AG04449 (cell line): ENCODE measurements at regions of chr1 and their contacts with region 1.

Region 1: DNA sequence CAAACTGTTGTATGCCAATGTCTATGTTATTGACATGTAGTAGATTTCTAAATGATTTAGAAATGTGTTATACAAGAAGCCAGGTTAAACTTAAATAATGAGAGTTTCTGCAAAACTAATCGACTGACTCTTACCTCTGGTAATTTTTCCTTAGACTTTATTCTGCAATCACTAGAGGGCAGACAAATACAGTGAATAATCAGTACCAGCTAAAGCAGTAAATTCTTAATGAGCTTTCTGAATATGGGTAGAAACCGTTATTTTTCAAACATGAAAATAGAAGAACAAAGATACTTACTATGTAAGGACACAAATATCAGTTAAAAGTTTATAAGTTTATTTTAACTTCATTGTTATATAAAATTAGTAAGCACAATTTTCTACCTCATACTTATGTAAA is 97.9 kb upstream of the RGS1 start:
- DNase-seq: no peak
- H3K4me3 ChIP-seq: no peak overlapping the region
- CTCF ChIP-seq: peak; percentile 33

Region 2: GRCh38 chr1:192118881-192119405 is 358.7 kb before region 1 on chr1:
- CTCF ChIA-PET with region 1: no interaction called
- POLR2A ChIA-PET with region 1: no interaction called
- DNase-seq: no peak
- H3K4me3 ChIP-seq: no peak overlapping the region
- CTCF ChIP-seq: no peak

Region 3: GRCh38 chr1:192461684-192462083 is 15.9 kb before region 1 on chr1:
- CTCF ChIA-PET with region 1: interaction called, 17 read pairs
- POLR2A ChIA-PET with region 1: no interaction called
- DNase-seq: no peak
- H3K4me3 ChIP-seq: no peak overlapping the region
- CTCF ChIP-seq: no peak

Region 4: DNA sequence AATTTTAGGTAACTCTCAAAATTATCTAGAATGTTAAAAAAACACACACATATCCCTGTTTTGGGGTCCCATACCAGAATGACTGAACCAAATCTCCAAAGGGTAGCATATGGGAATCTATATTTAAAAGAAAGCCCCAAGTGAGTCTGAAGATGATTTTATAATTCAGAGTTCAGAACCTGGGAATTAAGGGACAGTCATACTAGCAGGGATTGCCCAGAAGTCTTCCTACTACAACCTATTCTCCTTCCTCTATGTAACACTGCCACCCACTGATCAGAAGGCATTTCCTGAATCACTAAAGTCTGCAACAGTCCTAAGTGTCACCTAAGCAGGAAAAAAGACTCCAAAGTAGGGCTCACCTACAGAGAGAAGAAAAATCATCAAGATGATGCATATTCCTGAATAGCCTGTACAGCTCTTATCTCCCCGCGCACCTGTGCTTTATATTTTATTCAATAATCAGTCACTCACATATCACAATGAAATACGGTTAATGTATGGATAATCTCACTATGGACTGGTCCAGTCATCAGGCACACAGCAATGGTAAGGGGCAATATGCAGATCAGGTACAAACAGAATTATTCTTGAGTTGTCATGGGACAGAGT is 102.8 kb after region 1 on chr1:
- CTCF ChIA-PET with region 1: interaction called, 226 read pairs
- POLR2A ChIA-PET with region 1: no interaction called
- DNase-seq: no peak
- H3K4me3 ChIP-seq: no peak overlapping the region
- CTCF ChIP-seq: peak; percentile 47

Region 5: DNA sequence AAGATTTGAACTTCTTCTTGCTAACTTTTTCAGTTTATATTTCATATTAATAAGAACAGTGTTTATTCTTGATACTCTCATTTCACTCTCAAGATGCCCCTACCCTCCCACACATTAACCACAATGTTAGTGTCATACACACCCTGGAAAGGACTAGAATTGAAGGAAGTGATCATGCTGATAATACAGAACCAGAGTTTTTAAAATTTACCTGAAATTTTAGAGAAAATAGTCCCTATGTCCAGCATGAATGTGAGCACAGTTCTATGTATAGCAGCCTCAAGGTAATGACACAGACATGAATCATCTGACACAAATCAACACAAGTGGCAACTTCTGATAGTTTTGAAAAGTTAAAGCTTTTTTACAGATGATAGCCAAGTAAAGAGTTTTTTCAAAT is 123.9 kb after region 1 on chr1:
- CTCF ChIA-PET with region 1: interaction called, 110 read pairs
- POLR2A ChIA-PET with region 1: no interaction called
- DNase-seq: no peak
- H3K4me3 ChIP-seq: no peak overlapping the region
- CTCF ChIP-seq: no peak

Region 6: GRCh38 chr1:192808518-192809306 is 331.1 kb after region 1 on chr1 and contains the start of gene RGS2:
- CTCF ChIA-PET with region 1: interaction called, 15 read pairs
- POLR2A ChIA-PET with region 1: interaction called, 3 read pairs
- DNase-seq: peak; percentile 49
- H3K4me3 ChIP-seq: peak within 1 kb of the TSS; percentile 93
- CTCF ChIP-seq: no peak

Region 7: GRCh38 chr1:193031438-193031837 is 553.8 kb after region 1 on chr1:
- CTCF ChIA-PET with region 1: interaction called, 22 read pairs
- POLR2A ChIA-PET with region 1: no interaction called
- DNase-seq: no peak
- H3K4me3 ChIP-seq: no peak overlapping the region
- CTCF ChIP-seq: no peak